K562 (cell line): ENCODE measurements at regions of chr10 and their contacts with region 1.

Region 1: DNA sequence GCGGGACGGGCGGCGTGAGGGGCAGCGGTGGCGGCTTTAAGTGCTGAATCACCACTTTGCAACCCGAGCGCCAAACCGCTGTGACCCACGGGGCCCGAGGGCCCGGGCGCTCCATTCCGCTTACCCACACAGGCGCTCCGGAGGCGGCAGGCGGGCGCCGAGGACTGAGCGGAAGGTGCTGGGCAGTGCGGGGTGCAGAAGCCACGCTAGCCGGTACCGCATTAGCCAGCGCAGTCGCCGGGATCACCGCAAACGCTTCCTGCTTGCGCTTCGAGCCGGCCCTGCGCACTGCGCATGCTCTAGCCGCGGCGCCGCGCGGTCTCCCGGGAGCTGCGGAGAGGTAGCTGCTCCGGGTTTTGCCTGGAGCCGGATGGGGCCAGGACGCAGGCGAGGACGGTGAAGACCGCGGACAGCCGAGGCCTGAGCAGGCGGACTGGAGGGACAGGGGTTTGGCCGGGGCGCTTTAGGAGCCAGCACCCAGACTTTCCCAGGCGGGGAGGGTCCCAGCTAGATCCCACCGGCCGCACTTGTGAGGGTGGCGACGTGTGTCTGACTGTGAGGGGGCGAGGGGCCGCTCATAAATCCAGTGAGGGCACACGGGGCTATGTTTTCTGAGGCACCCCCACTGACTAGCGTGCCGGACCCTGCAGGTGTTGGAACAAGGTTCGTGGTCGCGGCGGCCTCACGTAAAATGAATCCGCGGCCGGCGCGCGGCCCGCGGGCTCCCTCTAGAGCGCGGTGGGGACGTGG is at the start of gene IDE:
- DNase-seq: peak; percentile 78 to 88 (median 83)
- ATAC-seq: peak; percentile 87
- H3K4me3 ChIP-seq: peak within 1 kb of the TSS; percentile 87
- H3K27ac ChIP-seq: peak within 1 kb of the TSS; percentile 97
- H3K4me1 ChIP-seq: peaks cover 9 to 14% of the 10 kb centered on the region in 2 experiments; a peak in 4 of 5 replicates
- H3K27me3 ChIP-seq: no peaks in the 10 kb centered on the region
- CTCF ChIP-seq: peak; percentile 84 to 91 (median 84)
- EP300 ChIP-seq: 0 out of 2 replicates have a peak, but pooled peaks have one; percentile 1
- POLR2A ChIP-seq: peak; percentile 90
- RAD21 ChIP-seq: peak; percentile 72 to 79
- polyA plus RNA-seq, gene IDE: 10.2 to 19.5 TPM

Region 2: DNA sequence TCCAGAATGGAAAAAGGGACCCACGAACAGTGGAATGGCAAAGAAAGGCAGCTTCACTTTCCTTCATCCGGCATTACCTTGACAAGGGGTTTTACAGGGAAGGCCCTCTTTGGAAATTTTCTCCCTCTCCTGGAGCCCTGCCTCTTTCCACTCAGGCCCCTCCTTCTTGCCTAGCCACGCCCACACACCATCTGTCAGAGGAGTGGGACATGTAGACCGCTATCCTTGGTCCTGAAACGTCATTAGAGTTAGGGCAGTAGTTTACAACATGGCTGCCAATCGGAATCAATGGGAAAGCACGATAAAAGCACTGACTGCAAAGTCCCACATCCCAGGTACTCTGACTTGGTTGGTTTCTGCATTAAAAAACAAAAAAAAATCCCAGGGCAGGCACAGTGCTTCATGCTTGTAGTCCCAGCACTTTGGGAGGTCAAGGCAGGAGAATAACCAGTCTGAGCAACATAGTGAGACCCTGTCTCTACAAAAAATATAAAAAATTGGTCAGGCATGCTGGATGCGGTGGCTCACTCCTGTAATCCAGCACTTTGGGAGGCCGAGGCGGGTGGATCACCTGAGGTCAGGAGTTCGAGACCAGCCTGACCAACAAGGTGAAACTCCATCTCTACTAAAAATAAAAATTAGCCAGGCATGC is 186.6 kb before region 1 on chr10:
- CTCF ChIA-PET with region 1: no interaction called
- POLR2A ChIA-PET with region 1: no interaction called
- in situ Hi-C with region 1: no loop called
- intact Hi-C with region 1: loop called (anchors 10 kb)
- DNase-seq: peak; percentile 86 to 91 (median 88)
- ATAC-seq: peak; percentile 99
- H3K4me3 ChIP-seq: no peak overlapping the region
- H3K27ac ChIP-seq: no peak overlapping the region
- H3K4me1 ChIP-seq: no peaks in the 10 kb centered on the region
- H3K27me3 ChIP-seq: no peaks in the 10 kb centered on the region; a peak in 1 of 5 replicates
- CTCF ChIP-seq: no peak
- EP300 ChIP-seq: no peak
- POLR2A ChIP-seq: no peak
- RAD21 ChIP-seq: no peak

Region 3: GRCh38 chr10:92517034-92517655 is 56.8 kb before region 1 on chr10:
- CTCF ChIA-PET with region 1: interaction called, 17 read pairs
- POLR2A ChIA-PET with region 1: interaction called, 3 read pairs
- in situ Hi-C with region 1: loop called (anchors 10 kb)
- intact Hi-C with region 1: loop called (anchors 1 kb)
- DNase-seq: peak; percentile 18 to 78 (median 27)
- ATAC-seq: peak; percentile 97
- H3K4me3 ChIP-seq: no peak overlapping the region
- H3K27ac ChIP-seq: no peak overlapping the region
- H3K4me1 ChIP-seq: peaks cover 0 to 2% of the 10 kb centered on the region in 2 experiments; a peak in 1 of 5 replicates
- H3K27me3 ChIP-seq: no peaks in the 10 kb centered on the region
- CTCF ChIP-seq: peak; percentile 61 to 71 (median 65)
- EP300 ChIP-seq: no peak
- POLR2A ChIP-seq: no peak
- RAD21 ChIP-seq: peak; percentile 63 to 79

Region 4: GRCh38 chr10:93580828-93581227 is 1006.9 kb after region 1 on chr10:
- CTCF ChIA-PET with region 1: no interaction called
- POLR2A ChIA-PET with region 1: no interaction called
- in situ Hi-C with region 1: no loop called
- intact Hi-C with region 1: no loop called
- DNase-seq: peak in 1 of 4 experiments; percentile 11
- ATAC-seq: no peak
- H3K4me3 ChIP-seq: no peak overlapping the region
- H3K27ac ChIP-seq: no peak overlapping the region
- H3K4me1 ChIP-seq: no peaks in the 10 kb centered on the region; a peak in 1 of 5 replicates
- H3K27me3 ChIP-seq: peaks cover 0 to 10% of the 10 kb centered on the region in 2 experiments; a peak in 3 of 5 replicates
- CTCF ChIP-seq: no peak
- EP300 ChIP-seq: no peak
- POLR2A ChIP-seq: no peak
- RAD21 ChIP-seq: no peak